ENCODE measurements at regions of chr20 and their contacts with region 1.

Region 1: DNA sequence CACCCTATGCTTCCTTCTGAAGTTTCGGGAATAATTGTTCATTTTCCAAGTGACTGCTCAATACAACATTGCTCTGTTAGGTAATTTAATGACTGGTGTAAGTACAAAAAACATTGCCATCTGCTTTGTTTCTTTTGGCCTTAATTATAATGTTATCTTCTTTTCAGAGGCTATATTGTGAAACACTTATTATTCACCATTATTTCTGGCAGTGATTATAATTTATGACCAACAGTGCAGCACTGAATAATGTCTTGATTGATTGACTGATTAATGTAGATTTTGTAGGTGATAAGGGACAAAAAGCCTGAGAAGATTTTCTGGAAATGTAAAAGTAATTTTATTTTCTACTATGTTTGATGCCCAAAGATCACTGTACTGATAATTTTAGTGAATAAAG is 377.7 kb downstream of the PLCB1 start:
- DNase-seq: no peak
- H3K4me3 ChIP-seq: no peak overlapping the region
- H3K27ac ChIP-seq: no peak overlapping the region
- H3K4me1 ChIP-seq: no peaks in the 10 kb centered on the region
- H3K27me3 ChIP-seq: no peaks in the 10 kb centered on the region
- CTCF ChIP-seq: no peak
- POLR2A ChIP-seq: no peak

Region 2: GRCh38 chr20:8571611-8572010 is 61.8 kb after region 1 on chr20:
- intact Hi-C with region 1: loop called (anchors 10 kb)
- DNase-seq: no peak
- H3K4me3 ChIP-seq: no peak overlapping the region
- H3K27ac ChIP-seq: no peak overlapping the region
- H3K4me1 ChIP-seq: no peaks in the 10 kb centered on the region
- H3K27me3 ChIP-seq: no peaks in the 10 kb centered on the region
- CTCF ChIP-seq: no peak
- POLR2A ChIP-seq: no peak